GM12878 (cell line): ENCODE measurements at regions of chr6 and their contacts with region 1.

Region 1: GRCh38 chr6:56902641-56903464 is 52.1 kb upstream of the BEND6 start:
- DNase-seq: no peak
- ATAC-seq: peak; percentile 80
- H3K4me3 ChIP-seq: no peak overlapping the region
- H3K27ac ChIP-seq: no peak overlapping the region
- H3K4me1 ChIP-seq: no peaks in the 10 kb centered on the region
- H3K27me3 ChIP-seq: no peaks in the 10 kb centered on the region
- CTCF ChIP-seq: peak; percentile 61 to 65 (median 61); a peak in 5 of 6 replicates
- EP300 ChIP-seq: no peak
- POLR2A ChIP-seq: no peak
- RAD21 ChIP-seq: peak; percentile 80

Region 2: GRCh38 chr6:56542364-56543331 is 360.2 kb before region 1 on chr6:
- CTCF ChIA-PET with region 1: no interaction called
- POLR2A ChIA-PET with region 1: no interaction called
- RAD21 ChIA-PET with region 1: no interaction called
- SMC1A ChIA-PET with region 1: no interaction called
- in situ Hi-C with region 1: no loop called
- intact Hi-C with region 1: no loop called
- DNase-seq: peak; percentile 91
- ATAC-seq: peak; percentile 93
- H3K4me3 ChIP-seq: peak overlapping the region; percentile 73
- H3K27ac ChIP-seq: peak overlapping the region; percentile 70
- H3K4me1 ChIP-seq: peaks cover 13% of the 10 kb centered on the region; the same call in 1 of the 2 replicates
- H3K27me3 ChIP-seq: no peaks in the 10 kb centered on the region
- CTCF ChIP-seq: peak in 2 of 3 experiments; percentile 6 to 11; a peak in 2 of 6 replicates
- EP300 ChIP-seq: 0 out of 4 replicates have a peak, but pooled peaks of 1 of the 2 experiments have one; percentile 7
- POLR2A ChIP-seq: peak; percentile 90
- RAD21 ChIP-seq: no peak

Region 3: DNA sequence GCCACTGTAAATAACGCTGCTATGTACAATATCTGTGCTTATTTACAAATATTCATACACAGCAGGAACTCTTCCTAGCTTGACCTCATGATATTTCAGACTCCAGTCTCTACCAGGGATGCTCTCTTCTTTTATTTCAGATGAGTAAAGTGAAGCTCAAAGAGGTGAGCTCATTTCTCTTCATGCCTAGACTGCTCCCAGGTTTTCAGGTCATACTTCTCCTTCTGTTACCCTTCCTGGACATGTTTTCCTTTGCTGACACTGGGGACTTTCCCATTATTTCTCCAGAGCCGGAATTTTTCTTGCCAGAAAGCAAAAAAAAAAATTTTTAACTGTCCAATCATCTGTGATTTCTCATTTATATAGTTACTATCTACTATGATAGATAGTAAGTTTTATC is 113.0 kb before region 1 on chr6:
- CTCF ChIA-PET with region 1: no interaction called
- POLR2A ChIA-PET with region 1: no interaction called
- RAD21 ChIA-PET with region 1: no interaction called
- SMC1A ChIA-PET with region 1: no interaction called
- in situ Hi-C with region 1: no loop called
- intact Hi-C with region 1: no loop called
- DNase-seq: no peak
- ATAC-seq: peak; percentile 27
- H3K4me3 ChIP-seq: no peak overlapping the region
- H3K27ac ChIP-seq: peak overlapping the region; percentile 50; the same call in 1 of the 2 replicates
- H3K4me1 ChIP-seq: peaks cover 39% of the 10 kb centered on the region
- H3K27me3 ChIP-seq: no peaks in the 10 kb centered on the region
- CTCF ChIP-seq: no peak
- EP300 ChIP-seq: no peak
- POLR2A ChIP-seq: no peak
- RAD21 ChIP-seq: no peak

Region 4: DNA sequence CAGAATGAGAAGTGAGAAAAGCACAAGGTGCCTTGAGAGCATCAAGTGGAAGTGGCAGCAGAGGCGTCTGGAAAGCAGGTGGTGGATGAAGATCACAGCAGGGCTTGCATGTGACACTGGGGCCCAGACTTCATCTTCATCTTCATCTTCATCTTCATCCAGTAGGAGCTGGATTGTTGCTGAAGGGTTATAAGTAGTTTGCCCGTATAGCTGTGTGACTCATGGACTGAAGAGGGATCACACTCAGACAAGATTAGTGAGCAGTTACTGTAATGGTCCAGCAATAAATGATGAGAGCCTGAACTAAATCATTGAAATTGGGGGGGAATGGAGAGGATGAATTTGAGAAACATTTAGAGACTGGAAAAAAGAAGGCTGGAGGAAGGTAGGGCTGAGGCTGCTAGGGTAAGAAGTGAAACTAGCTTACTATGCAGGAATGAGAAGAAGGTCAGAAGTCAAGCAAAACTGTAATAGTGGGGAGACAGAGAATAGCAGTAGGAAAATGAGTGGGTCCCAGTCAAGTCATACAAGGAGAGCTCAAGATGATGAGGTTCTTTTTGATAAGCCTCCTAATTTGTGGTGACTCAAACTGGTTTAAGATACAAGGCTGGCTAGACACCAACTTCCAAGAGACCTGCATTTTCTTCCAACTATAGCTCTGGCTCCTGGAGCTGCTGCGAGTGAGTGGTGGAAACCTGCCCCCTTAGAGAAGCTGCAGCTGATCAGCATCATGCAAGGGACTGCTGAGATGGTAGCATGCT is 40.3 kb before region 1 on chr6:
- CTCF ChIA-PET with region 1: interaction called, 21 read pairs
- POLR2A ChIA-PET with region 1: no interaction called
- RAD21 ChIA-PET with region 1: interaction called, 3 read pairs
- SMC1A ChIA-PET with region 1: interaction called, 5 read pairs
- in situ Hi-C with region 1: no loop called
- intact Hi-C with region 1: no loop called
- DNase-seq: no peak
- ATAC-seq: peak; percentile 57
- H3K4me3 ChIP-seq: no peak overlapping the region
- H3K27ac ChIP-seq: no peak overlapping the region
- H3K4me1 ChIP-seq: peaks cover 17% of the 10 kb centered on the region
- H3K27me3 ChIP-seq: no peaks in the 10 kb centered on the region
- CTCF ChIP-seq: no peak
- EP300 ChIP-seq: no peak
- POLR2A ChIP-seq: no peak
- RAD21 ChIP-seq: no peak

Region 5: DNA sequence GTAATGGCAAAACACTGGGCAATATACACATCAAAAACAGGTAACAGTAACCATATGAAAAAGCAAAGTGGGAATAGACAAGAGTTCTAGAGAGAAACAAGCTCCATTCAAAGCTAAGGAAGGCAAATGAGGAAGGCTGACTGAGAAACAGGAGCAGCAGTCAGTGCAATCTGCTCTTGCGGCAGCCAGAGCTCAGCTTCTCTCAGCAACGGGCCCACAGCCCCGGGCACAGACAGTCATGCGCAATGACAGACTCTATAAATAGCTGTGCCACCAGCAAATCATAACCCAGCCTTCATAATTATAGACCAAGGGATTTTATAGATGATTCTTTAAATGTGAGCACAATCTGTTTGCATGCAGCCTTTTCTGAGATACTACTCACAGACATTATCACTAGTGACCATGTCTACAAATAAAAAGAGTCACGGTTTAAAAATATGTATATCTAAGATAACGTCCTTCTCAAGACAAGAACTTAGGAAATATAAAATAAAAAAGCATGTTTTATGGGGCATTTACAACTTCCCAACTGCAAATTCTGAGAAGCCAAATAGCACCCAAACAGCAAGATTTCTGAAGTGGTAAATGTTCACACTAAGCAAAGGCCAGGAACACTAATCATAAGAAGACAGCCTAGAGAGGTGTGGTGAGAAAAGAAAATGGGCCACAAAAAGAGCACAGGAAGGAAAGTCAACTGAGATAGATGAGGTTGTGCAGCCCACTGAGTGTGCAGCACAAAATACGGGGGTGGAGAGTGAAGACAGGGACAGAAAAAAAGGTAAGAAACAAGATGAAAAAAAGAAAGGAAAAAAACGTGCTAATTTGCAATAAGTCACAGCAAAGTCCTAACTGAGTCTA is 12.2 kb after region 1 on chr6:
- CTCF ChIA-PET with region 1: interaction called, 45 read pairs
- POLR2A ChIA-PET with region 1: no interaction called
- RAD21 ChIA-PET with region 1: interaction called, 7 read pairs
- SMC1A ChIA-PET with region 1: interaction called, 11 read pairs
- in situ Hi-C with region 1: no loop called
- intact Hi-C with region 1: no loop called
- DNase-seq: no peak
- ATAC-seq: peak; percentile 29; the same call in 1 of the 3 replicates
- H3K4me3 ChIP-seq: no peak overlapping the region
- H3K27ac ChIP-seq: no peak overlapping the region
- H3K4me1 ChIP-seq: peaks cover 4% of the 10 kb centered on the region
- H3K27me3 ChIP-seq: no peaks in the 10 kb centered on the region
- CTCF ChIP-seq: no peak
- EP300 ChIP-seq: no peak
- POLR2A ChIP-seq: no peak
- RAD21 ChIP-seq: no peak

Region 6: DNA sequence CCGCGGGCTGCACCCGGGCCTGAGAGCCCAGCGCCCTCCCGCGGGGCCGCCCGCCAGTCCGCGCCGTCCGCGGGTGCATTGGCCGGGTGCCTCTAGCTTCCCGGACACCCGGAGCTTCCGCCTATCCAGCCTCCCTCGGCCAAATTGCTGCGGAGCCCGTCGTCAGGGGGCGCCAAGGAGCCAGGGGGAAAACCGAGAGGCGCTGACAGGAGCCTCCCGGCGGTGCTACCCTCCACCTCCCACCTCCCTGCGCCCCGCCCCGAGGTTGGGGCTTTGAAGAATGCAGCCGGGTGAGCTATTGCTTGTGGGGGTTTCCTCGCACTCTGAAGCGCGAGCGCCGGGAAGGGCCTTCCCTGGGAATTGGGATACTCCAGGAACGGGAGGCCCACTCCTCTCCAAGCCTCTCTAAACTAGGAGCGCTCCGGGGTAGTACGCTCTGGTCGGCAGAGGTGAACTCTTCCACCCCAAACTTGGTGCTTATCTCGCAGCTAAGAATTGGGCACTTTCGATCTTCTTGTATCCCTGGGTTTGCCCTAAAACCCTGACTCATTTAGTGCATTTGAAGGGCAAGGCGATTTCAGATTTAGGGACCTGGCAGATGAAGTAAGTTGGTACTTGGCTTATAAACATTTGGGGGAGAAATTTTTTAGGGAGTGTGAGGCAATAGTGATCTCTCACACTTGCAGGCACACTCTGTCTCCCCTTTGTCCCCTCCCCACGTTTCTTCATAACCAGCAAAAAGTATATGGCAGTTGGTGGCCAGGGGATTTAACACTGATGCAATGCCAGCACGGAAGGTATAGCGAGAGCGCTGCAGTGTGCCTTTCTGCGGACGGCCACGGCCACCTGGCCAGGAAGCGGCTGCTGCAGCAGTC is 52.6 kb after region 1 on chr6:
- CTCF ChIA-PET with region 1: interaction called, 200 read pairs
- POLR2A ChIA-PET with region 1: interaction called, 4 read pairs
- RAD21 ChIA-PET with region 1: interaction called, 26 read pairs
- SMC1A ChIA-PET with region 1: interaction called, 37 read pairs
- in situ Hi-C with region 1: no loop called
- intact Hi-C with region 1: loop called (anchors 1 kb)
- DNase-seq: peak; percentile 62
- ATAC-seq: peak; percentile 79
- H3K4me3 ChIP-seq: peak overlapping the region; percentile 79
- H3K27ac ChIP-seq: peak overlapping the region; percentile 91
- H3K4me1 ChIP-seq: peaks cover 17% of the 10 kb centered on the region
- H3K27me3 ChIP-seq: no peaks in the 10 kb centered on the region
- CTCF ChIP-seq: peak; percentile 75 to 90 (median 80)
- EP300 ChIP-seq: no peak
- POLR2A ChIP-seq: peak; percentile 60
- RAD21 ChIP-seq: peak; percentile 62

Region 7: GRCh38 chr6:57021086-57021720 is 118.3 kb after region 1 on chr6:
- CTCF ChIA-PET with region 1: interaction called, 110 read pairs
- POLR2A ChIA-PET with region 1: no interaction called
- RAD21 ChIA-PET with region 1: interaction called, 35 read pairs
- SMC1A ChIA-PET with region 1: interaction called, 65 read pairs
- in situ Hi-C with region 1: loop called (anchors 5 kb)
- intact Hi-C with region 1: loop called (anchors 1 kb)
- DNase-seq: no peak
- ATAC-seq: peak; percentile 94
- H3K4me3 ChIP-seq: no peak overlapping the region
- H3K27ac ChIP-seq: no peak overlapping the region
- H3K4me1 ChIP-seq: no peaks in the 10 kb centered on the region
- H3K27me3 ChIP-seq: no peaks in the 10 kb centered on the region
- CTCF ChIP-seq: peak; percentile 38 to 47 (median 43); a peak in 4 of 6 replicates
- EP300 ChIP-seq: no peak
- POLR2A ChIP-seq: no peak
- RAD21 ChIP-seq: peak; percentile 27; the same call in 1 of the 2 replicates

Region 8: GRCh38 chr6:57324538-57324937 is 421.7 kb after region 1 on chr6:
- CTCF ChIA-PET with region 1: interaction called, 42 read pairs
- POLR2A ChIA-PET with region 1: no interaction called
- RAD21 ChIA-PET with region 1: interaction called, 15 read pairs
- SMC1A ChIA-PET with region 1: interaction called, 14 read pairs
- in situ Hi-C with region 1: loop called (anchors 5 kb)
- intact Hi-C with region 1: no loop called
- DNase-seq: no peak
- ATAC-seq: peak; percentile 63
- H3K4me3 ChIP-seq: no peak overlapping the region
- H3K27ac ChIP-seq: no peak overlapping the region
- H3K4me1 ChIP-seq: no peaks in the 10 kb centered on the region
- H3K27me3 ChIP-seq: no peaks in the 10 kb centered on the region
- CTCF ChIP-seq: peak; percentile 7 to 39 (median 32); a peak in 4 of 6 replicates
- EP300 ChIP-seq: no peak
- POLR2A ChIP-seq: no peak
- RAD21 ChIP-seq: peak; percentile 37